ENCODE measurements at regions of chr1 and their contacts with region 1.

Region 1: DNA sequence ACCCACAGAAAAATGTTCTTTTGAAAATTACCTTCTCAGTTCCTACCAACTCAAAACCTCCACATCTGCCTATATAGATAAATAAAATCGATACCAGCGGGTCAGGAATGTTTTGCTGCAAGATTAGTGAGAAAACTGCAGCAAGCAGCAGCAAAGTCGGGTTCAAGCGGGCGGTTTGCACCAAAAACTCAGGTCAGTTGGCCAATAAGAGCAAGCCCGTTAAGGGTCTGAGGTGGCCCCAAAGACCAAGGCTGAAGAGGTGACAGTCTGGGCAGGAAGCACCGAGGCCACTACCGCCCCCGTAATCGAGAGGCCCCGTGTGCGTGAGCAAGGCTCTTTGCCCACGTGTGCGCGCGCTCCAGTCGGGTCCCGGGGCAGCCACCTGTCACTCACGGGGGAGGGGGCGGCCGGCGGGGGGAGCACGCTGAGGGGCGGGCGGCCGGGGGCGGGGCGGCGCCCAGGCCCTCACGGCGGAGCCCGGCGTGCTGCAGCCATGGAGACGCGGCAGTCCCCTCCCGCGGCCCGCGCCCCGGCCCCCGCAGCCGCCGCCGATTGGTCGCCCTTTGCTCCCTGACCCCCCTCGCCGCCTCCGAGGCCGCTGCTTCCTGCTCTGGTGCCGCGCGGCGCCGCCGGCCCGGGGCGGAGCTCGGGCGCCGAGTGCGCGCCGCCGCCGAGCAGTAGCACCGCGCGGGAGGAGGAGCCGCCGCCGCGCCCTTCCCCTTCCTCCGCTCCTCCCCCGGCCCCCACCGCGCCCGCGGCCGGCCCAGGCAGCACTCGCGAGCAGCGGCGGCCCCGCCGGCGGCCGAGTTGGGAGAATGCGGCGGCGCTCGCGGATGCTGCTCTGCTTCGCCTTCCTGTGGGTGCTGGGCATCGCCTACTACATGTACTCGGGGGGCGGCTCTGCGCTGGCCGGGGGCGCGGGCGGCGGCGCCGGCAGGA is at the start of gene GALNT2:
- DNase-seq: peak; percentile 94
- ATAC-seq: peak; percentile 98
- total RNA-seq, gene GALNT2: 29.2 TPM

Region 2: GRCh38 chr1:229661022-229661877 is 405.5 kb before region 1 on chr1:
- intact Hi-C with region 1: loop called (anchors 5 kb)
- DNase-seq: peak; percentile 89
- ATAC-seq: peak; percentile 90

Region 3: GRCh38 chr1:229843627-229844238 is 223.0 kb before region 1 on chr1:
- intact Hi-C with region 1: loop called (anchors 1 kb)
- DNase-seq: no peak
- ATAC-seq: peak; percentile 80

Region 4: DNA sequence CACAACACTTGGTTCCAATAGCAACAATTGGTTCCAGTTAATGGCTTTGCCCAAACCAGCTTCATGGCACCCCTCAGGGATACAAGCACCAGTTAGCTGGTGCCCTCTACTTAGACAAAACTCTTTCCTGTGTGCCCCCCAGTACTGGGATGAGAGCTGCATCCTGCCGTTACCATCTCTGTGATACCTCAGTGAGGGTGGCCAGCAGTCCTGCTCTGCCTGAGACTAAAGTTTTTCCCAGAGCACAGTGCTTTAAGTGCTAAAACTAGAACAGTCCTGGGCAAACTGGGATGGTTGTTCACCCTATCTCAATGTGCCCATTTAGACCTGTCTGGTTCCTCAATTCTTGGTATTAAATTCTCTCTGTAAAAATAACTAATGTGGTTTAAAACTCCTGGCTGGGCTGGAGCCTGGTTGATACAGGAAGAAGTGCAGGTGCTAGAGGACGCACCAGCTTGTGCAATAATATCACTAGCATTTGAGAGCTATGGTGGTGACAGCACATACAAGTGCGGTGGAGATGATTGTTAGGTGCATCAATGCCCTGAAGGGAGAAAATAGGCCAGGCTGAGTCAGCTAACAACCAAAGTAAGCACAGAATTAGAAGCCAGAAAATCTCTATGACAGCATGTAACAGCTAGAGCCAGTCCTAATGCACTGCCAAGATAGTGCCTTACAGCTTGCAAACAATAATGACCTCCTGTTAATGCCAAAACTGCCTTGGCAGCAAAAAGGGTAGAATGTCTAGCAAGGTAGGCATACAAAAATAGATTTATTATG is 179.5 kb before region 1 on chr1:
- intact Hi-C with region 1: loop called (anchors 2 kb)
- DNase-seq: no peak
- ATAC-seq: peak; percentile 91

Region 5: GRCh38 chr1:230090194-230090711 is 23.5 kb after region 1 on chr1:
- intact Hi-C with region 1: no loop called
- DNase-seq: no peak
- ATAC-seq: no peak

Region 6: DNA sequence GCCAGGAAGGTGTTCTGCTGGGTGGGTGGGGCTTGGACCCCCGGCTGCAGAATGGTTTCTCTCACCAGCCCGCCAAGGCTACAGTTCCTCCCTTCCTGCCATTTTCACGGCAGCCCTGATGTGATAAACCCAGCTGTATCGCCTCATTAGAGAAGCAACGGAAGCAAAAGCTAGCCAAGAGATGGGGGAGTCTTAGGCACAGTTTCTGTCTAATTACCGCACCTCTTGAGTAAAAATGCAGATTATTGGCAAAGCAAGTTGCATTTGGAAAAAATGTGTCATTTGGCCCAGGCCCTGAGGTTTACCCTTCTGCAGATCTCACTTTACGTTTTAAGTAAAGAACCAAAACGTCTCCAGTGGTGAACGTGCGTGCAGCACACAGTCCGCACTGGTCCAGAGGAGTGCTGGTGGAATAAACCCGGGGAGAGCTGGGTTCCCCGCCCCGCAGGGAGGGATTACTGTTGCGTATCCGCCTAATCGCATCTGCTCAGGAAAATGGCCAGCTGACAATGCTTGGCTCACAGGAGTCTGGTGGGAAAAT is 110.2 kb after region 1 on chr1:
- intact Hi-C with region 1: loop called (anchors 5 kb)
- DNase-seq: peak; percentile 83
- ATAC-seq: peak; percentile 98

Region 7: GRCh38 chr1:230215031-230215430 is 148.3 kb after region 1 on chr1:
- intact Hi-C with region 1: loop called (anchors 5 kb)
- DNase-seq: peak; percentile 69
- ATAC-seq: peak; percentile 90

Measured in Right ventricle myocardium inferior (tissue), 1 donor.